ENCODE measurements at regions of chr2 and their contacts with region 1.

Region 1: GRCh38 chr2:231925303-231926179 is 655 bp downstream of the NPPC start:
- DNase-seq: peak; percentile 47
- ATAC-seq: peak; percentile 87
- H3K4me3 ChIP-seq: peak overlapping the region; percentile 35 to 52
- H3K27ac ChIP-seq: no peak overlapping the region; the same call in 1 of the 2 replicates
- H3K4me1 ChIP-seq: peaks cover 8 to 18% of the 10 kb centered on the region in 2 experiments
- H3K27me3 ChIP-seq: no peaks in the 10 kb centered on the region
- CTCF ChIP-seq: peak; percentile 76 to 78 (median 77)
- POLR2A ChIP-seq: no peak
- RAD21 ChIP-seq: peak; percentile 81

Region 2: DNA sequence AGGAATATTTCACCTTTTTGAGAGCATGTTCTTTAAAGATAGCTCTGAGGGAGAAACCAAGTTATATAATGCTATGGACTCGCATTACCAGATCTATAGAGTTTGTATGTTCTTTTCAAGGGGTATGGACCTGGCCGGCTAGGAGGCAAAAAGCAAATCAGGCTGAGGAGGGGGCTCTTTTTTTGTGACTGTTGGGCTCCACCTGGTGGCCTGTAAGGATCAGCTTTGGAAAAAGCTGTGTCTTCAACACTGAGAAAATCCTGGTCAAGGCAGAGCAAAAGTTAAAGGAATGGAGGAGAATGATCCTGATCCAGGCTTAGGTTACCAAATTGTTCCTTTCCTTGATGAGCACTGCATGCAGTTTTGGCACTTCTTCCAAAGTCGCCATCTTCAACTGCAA is 216.5 kb after region 1 on chr2:
- CTCF ChIA-PET with region 1: interaction called, 22 read pairs
- POLR2A ChIA-PET with region 1: no interaction called
- RAD21 ChIA-PET with region 1: interaction called in 1 of 2 experiments, 3 read pairs
- intact Hi-C with region 1: loop called (anchors 1 kb)
- DNase-seq: peak; percentile 12
- ATAC-seq: peak; percentile 73
- H3K4me3 ChIP-seq: no peak overlapping the region
- H3K27ac ChIP-seq: no peak overlapping the region
- H3K4me1 ChIP-seq: no peaks in the 10 kb centered on the region
- H3K27me3 ChIP-seq: no peaks in the 10 kb centered on the region
- CTCF ChIP-seq: peak; percentile 73 to 85 (median 81); a peak in 5 of 6 replicates
- POLR2A ChIP-seq: no peak
- RAD21 ChIP-seq: peak; percentile 82

Region 3: DNA sequence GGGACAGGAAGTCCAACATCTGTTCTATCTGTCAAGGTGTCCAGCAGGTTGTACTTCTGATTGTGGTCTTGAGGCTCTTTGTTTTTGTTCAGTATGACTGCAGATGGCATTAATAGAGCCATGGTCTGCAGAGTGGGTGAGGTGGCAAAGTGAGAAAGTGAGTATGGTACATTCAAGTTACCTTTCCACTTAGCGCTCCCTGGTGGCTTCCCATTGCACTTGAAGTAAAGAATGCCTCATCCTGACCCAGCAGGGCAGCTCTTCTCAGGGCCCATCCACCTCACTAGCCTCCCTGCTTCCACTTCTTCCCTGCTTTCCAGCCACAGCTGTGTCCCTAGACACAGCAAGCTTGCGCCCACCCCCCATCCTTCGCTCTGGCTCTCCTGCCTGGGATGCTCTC is 305.0 kb after region 1 on chr2:
- CTCF ChIA-PET with region 1: interaction called, 7 read pairs
- POLR2A ChIA-PET with region 1: no interaction called
- RAD21 ChIA-PET with region 1: no interaction called
- intact Hi-C with region 1: loop called (anchors 1 kb)
- DNase-seq: peak; percentile 3
- ATAC-seq: peak; percentile 67
- H3K4me3 ChIP-seq: no peak overlapping the region
- H3K27ac ChIP-seq: no peak overlapping the region
- H3K4me1 ChIP-seq: peaks cover under 1 to 3% of the 10 kb centered on the region in 2 experiments; a peak in 3 of 4 replicates
- H3K27me3 ChIP-seq: no peaks in the 10 kb centered on the region
- CTCF ChIP-seq: peak in 2 of 3 experiments; percentile 38 to 39; a peak in 3 of 6 replicates
- POLR2A ChIP-seq: no peak
- RAD21 ChIP-seq: peak; percentile 32; the same call in 1 of the 2 replicates

Region 4: DNA sequence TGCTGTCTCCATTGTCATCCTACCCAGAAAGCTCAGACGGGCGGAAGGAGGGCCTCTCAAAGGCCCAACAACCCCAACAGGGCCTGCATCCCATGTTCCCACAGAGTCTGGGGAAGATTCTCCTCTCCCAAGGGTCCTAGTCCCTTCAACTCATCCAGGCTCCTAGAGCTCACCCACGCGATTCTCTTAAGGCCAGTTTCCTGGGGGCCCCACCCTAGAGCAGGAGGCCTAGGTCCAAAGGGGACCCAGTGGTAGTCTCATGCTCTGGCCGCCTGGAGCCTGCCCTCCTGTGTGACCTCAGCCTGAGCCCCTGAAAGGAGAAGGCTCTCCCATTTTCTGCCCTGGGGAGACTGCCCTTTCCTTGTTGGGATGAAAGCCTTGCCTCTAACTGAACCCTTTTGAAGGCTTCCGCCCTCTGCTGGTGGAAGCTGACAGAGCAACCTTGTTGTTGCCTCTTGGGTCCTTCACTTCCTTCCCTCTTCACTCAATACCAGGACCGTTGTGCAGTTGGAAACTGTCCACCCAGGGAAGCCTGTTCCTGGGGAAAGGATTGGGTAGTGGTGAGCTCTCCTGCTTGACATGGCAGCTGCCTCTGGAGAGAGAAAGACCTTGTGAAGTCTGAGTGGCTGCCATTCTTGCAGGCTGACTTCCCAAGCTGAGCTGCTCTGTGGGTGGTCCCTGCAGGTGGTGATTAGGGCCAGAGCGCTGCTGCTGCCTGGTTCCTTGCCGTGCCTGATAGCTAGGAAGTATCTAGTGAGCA is 367.0 kb after region 1 on chr2:
- CTCF ChIA-PET with region 1: interaction called, 10 read pairs
- POLR2A ChIA-PET with region 1: no interaction called
- RAD21 ChIA-PET with region 1: no interaction called
- intact Hi-C with region 1: loop called (anchors 1 kb)
- DNase-seq: peak; percentile 54
- ATAC-seq: peak; percentile 96
- H3K4me3 ChIP-seq: no peak overlapping the region
- H3K27ac ChIP-seq: no peak overlapping the region
- H3K4me1 ChIP-seq: no peaks in the 10 kb centered on the region
- H3K27me3 ChIP-seq: no peaks in the 10 kb centered on the region
- CTCF ChIP-seq: peak; percentile 64 to 86 (median 83); a peak in 5 of 6 replicates
- POLR2A ChIP-seq: no peak
- RAD21 ChIP-seq: peak; percentile 54

Region 5: GRCh38 chr2:232327105-232328041 is 401.8 kb after region 1 on chr2:
- CTCF ChIA-PET with region 1: interaction called, 8 read pairs
- POLR2A ChIA-PET with region 1: no interaction called
- RAD21 ChIA-PET with region 1: interaction called in 1 of 2 experiments, 3 read pairs
- intact Hi-C with region 1: loop called (anchors 1 kb)
- DNase-seq: peak; percentile 27
- ATAC-seq: peak; percentile 84
- H3K4me3 ChIP-seq: no peak overlapping the region
- H3K27ac ChIP-seq: no peak overlapping the region
- H3K4me1 ChIP-seq: no peaks in the 10 kb centered on the region
- H3K27me3 ChIP-seq: no peaks in the 10 kb centered on the region
- CTCF ChIP-seq: peak; percentile 75 to 85 (median 77)
- POLR2A ChIP-seq: no peak
- RAD21 ChIP-seq: peak; percentile 74